ENCODE measurements at regions of chr20 and their contacts with region 1.

Region 1: GRCh38 chr20:58330687-58331086 is 21.2 kb downstream of the RAB22A start:
- DNase-seq: no peak
- ATAC-seq: no peak
- H3K4me3 ChIP-seq: no peak overlapping the region
- H3K27ac ChIP-seq: no peak overlapping the region
- H3K4me1 ChIP-seq: peaks cover 0 to 10% of the 10 kb centered on the region in 2 experiments; a peak in 2 of 5 replicates
- H3K27me3 ChIP-seq: no peaks in the 10 kb centered on the region
- CTCF ChIP-seq: no peak
- EP300 ChIP-seq: no peak
- POLR2A ChIP-seq: no peak
- RAD21 ChIP-seq: no peak

Region 2: DNA sequence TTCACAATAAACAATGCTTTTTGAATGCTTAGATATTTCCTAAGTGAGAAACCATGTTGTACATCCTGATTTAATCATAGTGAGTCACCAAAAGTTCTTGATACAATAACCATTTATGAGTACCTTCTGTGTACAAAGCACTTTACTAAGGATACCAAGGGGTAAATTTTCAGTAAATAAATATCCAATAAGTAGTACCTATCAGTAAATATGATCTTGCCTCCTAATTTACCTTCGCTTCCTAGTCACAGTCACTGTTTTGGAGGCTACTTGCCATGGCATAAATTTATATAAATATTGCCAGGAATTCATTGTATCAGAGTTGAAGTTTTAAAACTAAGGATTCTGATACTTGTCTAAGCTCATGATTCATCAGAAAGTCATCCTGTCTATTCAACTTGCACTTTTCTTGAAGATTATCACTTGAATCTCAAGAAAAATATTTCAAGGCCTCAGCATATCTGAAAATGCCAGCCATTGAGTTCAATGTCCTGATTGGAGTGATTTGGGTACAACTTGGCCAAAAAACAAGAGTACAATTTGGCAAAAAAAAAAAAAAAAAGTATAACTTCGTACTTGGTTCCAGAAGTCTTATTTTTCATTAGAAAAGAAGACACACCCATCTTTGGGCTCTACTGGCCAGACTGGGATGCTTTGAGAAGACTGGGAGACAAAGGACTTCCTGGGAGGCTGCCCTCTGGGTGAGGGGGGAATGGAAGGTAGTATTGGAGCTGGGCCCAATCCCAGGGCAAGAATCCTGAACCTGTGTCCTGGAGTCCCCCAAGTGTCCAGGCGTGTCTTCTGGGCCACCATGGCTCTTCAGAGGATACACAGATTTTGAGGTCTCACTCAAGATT is 11.6 kb after region 1 on chr20:
- CTCF ChIA-PET with region 1: no interaction called
- POLR2A ChIA-PET with region 1: interaction called, 12 read pairs
- in situ Hi-C with region 1: no loop called
- intact Hi-C with region 1: no loop called
- DNase-seq: no peak
- ATAC-seq: no peak
- H3K4me3 ChIP-seq: no peak overlapping the region
- H3K27ac ChIP-seq: no peak overlapping the region
- H3K4me1 ChIP-seq: peaks cover 4 to 6% of the 10 kb centered on the region in 2 experiments; a peak in 3 of 5 replicates
- H3K27me3 ChIP-seq: no peaks in the 10 kb centered on the region
- CTCF ChIP-seq: no peak
- EP300 ChIP-seq: no peak
- POLR2A ChIP-seq: no peak
- RAD21 ChIP-seq: no peak

Region 3: GRCh38 chr20:58584881-58585752 is 254.4 kb after region 1 on chr20:
- CTCF ChIA-PET with region 1: no interaction called
- POLR2A ChIA-PET with region 1: no interaction called
- in situ Hi-C with region 1: no loop called
- intact Hi-C with region 1: no loop called
- DNase-seq: no peak
- ATAC-seq: no peak
- H3K4me3 ChIP-seq: no peak overlapping the region
- H3K27ac ChIP-seq: no peak overlapping the region
- H3K4me1 ChIP-seq: no peaks in the 10 kb centered on the region; a peak in 2 of 5 replicates
- H3K27me3 ChIP-seq: peaks cover 8 to 47% of the 10 kb centered on the region in 2 experiments; a peak in 4 of 5 replicates
- CTCF ChIP-seq: no peak
- EP300 ChIP-seq: no peak
- POLR2A ChIP-seq: no peak
- RAD21 ChIP-seq: no peak

Region 4: DNA sequence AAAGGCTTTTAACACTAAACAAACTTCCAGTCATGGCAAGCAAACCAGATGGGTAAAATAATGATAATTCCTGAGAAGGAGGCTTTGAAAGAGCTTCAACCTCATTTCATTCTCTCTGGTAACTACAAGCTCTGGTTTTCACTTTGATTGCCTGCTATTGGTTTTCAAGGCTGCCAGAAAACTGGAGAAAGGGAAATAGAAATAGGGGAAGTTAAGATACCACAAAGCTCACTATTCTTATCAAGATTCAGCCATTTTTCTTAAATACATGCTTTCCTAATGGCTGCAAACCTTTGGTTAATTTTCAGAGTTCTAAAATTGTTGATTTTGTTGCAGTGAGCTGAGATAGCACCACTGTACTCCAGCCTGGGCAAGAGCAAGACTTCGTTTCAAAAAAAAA is 607.9 kb after region 1 on chr20:
- CTCF ChIA-PET with region 1: no interaction called
- POLR2A ChIA-PET with region 1: no interaction called
- in situ Hi-C with region 1: no loop called
- intact Hi-C with region 1: no loop called
- DNase-seq: no peak
- ATAC-seq: no peak
- H3K4me3 ChIP-seq: no peak overlapping the region
- H3K27ac ChIP-seq: no peak overlapping the region
- H3K4me1 ChIP-seq: no peaks in the 10 kb centered on the region
- H3K27me3 ChIP-seq: peaks cover 12 to 20% of the 10 kb centered on the region in 2 experiments; a peak in 4 of 5 replicates
- CTCF ChIP-seq: no peak
- EP300 ChIP-seq: no peak
- POLR2A ChIP-seq: no peak
- RAD21 ChIP-seq: no peak

Measured in K562 (cell line).